ENCODE measurements at regions of chr7 and their contacts with region 1.

Region 1: GRCh38 chr7:128398016-128398840 is 11.6 kb downstream of the IMPDH1 start:
- DNase-seq: peak; percentile 41
- H3K4me3 Mint-ChIP-seq: no peak overlapping the region
- H3K27ac Mint-ChIP-seq: no peak overlapping the region
- H3K4me1 Mint-ChIP-seq: peaks cover 6% of the 10 kb centered on the region
- H3K27me3 Mint-ChIP-seq: no peaks in the 10 kb centered on the region

Region 2: GRCh38 chr7:128287556-128287955 is 110.7 kb before region 1 on chr7:
- CTCF ChIA-PET with region 1: no interaction called
- POLR2A ChIA-PET with region 1: no interaction called
- DNase-seq: no peak
- H3K4me3 Mint-ChIP-seq: no peak overlapping the region
- H3K27ac Mint-ChIP-seq: no peak overlapping the region
- H3K4me1 Mint-ChIP-seq: no peaks in the 10 kb centered on the region
- H3K27me3 Mint-ChIP-seq: no peaks in the 10 kb centered on the region

Region 3: GRCh38 chr7:128387216-128388144 is 10.7 kb before region 1 on chr7:
- CTCF ChIA-PET with region 1: interaction called, 24 read pairs
- POLR2A ChIA-PET with region 1: no interaction called
- DNase-seq: peak; percentile 66
- H3K4me3 Mint-ChIP-seq: no peak overlapping the region
- H3K27ac Mint-ChIP-seq: no peak overlapping the region
- H3K4me1 Mint-ChIP-seq: no peaks in the 10 kb centered on the region
- H3K27me3 Mint-ChIP-seq: peaks cover 3% of the 10 kb centered on the region

Region 4: DNA sequence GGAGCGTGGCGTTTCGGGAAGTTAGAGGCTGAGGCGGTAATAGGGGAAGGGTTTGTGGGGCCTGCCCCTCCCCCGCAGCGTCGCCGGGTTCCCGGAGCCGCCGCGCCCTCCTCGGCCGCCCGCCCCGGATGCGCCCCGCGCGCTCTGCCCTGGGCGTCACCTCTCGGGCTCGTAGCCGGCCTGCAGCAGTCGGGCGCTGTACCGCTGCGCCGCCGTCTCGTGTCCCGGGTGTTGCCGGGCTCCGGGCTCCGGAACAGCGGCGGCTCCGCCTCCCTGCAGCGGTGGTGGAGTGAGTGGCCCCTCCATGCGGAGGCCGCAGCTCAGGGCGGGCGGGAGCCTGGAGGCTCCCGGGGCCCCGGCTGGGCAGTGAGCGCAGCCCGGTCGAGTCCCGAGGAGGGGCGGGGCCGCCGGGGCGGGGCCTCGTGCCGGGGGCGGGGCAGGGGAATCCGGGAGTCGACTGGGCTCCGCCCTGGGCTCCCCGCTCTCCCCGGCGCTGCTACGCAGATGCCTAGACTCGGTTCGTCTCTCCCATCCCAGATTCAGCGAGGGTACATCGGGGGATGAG is 11.4 kb after region 1 on chr7 and contains the start of gene IMPDH1:
- CTCF ChIA-PET with region 1: interaction called, 21 read pairs
- POLR2A ChIA-PET with region 1: interaction called, 3 read pairs
- DNase-seq: peak; percentile 88
- H3K4me3 Mint-ChIP-seq: peak within 1 kb of the TSS; percentile 87
- H3K27ac Mint-ChIP-seq: peak within 1 kb of the TSS; percentile 80
- H3K4me1 Mint-ChIP-seq: peaks cover 35% of the 10 kb centered on the region
- H3K27me3 Mint-ChIP-seq: peaks cover 20% of the 10 kb centered on the region
- total RNA-seq, gene IMPDH1: 64.7 to 67.4 TPM

Region 5: DNA sequence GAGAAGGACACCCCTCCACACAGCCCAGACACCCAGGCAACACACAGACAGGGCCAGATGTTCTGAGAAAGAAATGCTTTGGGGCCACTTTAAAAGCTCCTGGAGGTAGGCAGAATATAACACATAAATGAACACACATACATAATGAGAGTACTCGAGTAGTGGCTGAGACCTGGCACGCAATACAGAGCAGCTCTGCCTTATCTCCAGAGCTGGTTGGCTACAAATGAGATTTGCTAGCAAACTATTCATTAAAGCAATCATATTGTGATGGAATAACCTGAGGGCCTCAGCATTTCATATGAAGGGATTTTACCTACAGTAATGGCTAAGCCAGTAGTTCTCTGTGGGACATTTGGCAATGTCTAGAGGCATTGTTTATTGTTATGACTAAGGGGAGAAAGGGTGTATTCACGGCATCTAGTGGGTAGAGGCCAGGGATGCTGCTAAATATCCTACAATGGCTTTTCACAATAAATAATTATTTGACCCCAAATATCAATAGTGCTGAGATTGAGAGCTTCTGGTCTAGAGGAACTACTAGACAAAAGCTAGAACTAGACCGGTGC is 17.1 kb after region 1 on chr7:
- CTCF ChIA-PET with region 1: interaction called, 21 read pairs
- POLR2A ChIA-PET with region 1: interaction called, 3 read pairs
- DNase-seq: no peak
- H3K4me3 Mint-ChIP-seq: no peak overlapping the region
- H3K27ac Mint-ChIP-seq: no peak overlapping the region
- H3K4me1 Mint-ChIP-seq: peaks cover 4% of the 10 kb centered on the region
- H3K27me3 Mint-ChIP-seq: peaks cover 24% of the 10 kb centered on the region

Region 6: DNA sequence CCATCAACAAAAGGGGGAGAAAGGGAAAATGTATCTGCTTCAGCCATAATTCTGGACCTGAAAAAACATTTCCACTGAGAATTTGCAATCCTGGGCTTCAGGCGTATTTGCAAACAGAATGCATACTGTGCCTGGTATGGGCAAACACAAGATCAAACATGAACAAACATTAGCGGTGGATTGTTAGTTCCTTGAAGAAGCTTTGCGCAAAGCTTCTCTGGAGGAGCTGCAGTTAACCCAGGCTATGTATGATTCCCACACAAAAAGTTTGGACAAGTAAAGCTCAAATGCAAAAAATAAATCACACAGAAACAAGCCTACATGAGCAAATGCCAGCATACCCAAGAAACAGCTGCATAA is 37.1 kb after region 1 on chr7:
- CTCF ChIA-PET with region 1: no interaction called
- POLR2A ChIA-PET with region 1: no interaction called
- DNase-seq: no peak
- H3K4me3 Mint-ChIP-seq: no peak overlapping the region
- H3K27ac Mint-ChIP-seq: no peak overlapping the region
- H3K4me1 Mint-ChIP-seq: no peaks in the 10 kb centered on the region
- H3K27me3 Mint-ChIP-seq: peaks cover 15% of the 10 kb centered on the region

Region 7: GRCh38 chr7:128455551-128456254 is 57.5 kb after region 1 on chr7 and contains the start of gene HILPDA:
- CTCF ChIA-PET with region 1: interaction called, 10 read pairs
- POLR2A ChIA-PET with region 1: no interaction called
- DNase-seq: peak; percentile 95
- H3K4me3 Mint-ChIP-seq: peak within 1 kb of the TSS; percentile 94
- H3K27ac Mint-ChIP-seq: peak within 1 kb of the TSS; percentile 90
- H3K4me1 Mint-ChIP-seq: peaks cover 56% of the 10 kb centered on the region
- H3K27me3 Mint-ChIP-seq: peaks cover 20% of the 10 kb centered on the region
- total RNA-seq, gene HILPDA: 51.8 to 53.4 TPM